GM12878 (cell line): ENCODE measurements at regions of chr7 and their contacts with region 1.

Region 1: DNA sequence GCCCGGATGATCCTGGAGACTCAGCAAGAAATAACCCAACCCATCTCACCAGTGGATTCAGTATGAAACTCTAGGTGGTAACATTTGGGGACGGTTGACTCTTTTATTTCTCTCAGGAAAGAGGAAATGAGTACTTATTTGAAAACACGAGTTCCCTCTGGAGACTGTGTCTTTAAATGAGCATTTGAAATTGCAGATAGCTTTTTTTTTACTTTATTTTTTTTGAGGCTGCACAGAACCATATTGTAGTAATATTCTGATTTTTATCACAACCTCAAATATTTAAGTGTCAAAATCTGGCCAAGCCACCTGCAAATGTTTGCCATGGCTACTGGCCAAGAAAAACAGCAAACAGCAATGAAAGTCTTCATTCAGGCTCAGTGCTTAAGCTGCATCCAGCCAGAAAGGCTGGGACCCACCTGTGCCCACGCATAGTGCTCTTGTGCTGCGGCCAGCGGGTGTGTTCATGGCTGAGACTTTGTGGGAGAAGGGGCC is 160.8 kb downstream of the CREB5 start:
- DNase-seq: no peak
- ATAC-seq: peak; percentile 40
- H3K4me3 ChIP-seq: no peak overlapping the region
- H3K27ac ChIP-seq: peak overlapping the region; percentile 29
- H3K4me1 ChIP-seq: peaks cover 23% of the 10 kb centered on the region
- H3K27me3 ChIP-seq: no peaks in the 10 kb centered on the region
- CTCF ChIP-seq: no peak
- EP300 ChIP-seq: peak in 1 of 2 experiments; percentile 9; a peak in 2 of 4 replicates
- POLR2A ChIP-seq: no peak; the same call in 1 of the 2 replicates
- RAD21 ChIP-seq: no peak

Region 2: GRCh38 chr7:28408960-28409715 is 164.0 kb before region 1 on chr7:
- CTCF ChIA-PET with region 1: interaction called, 16 read pairs
- POLR2A ChIA-PET with region 1: interaction called, 88 read pairs
- RAD21 ChIA-PET with region 1: interaction called, 156 read pairs
- SMC1A ChIA-PET with region 1: interaction called, 81 read pairs
- in situ Hi-C with region 1: no loop called
- intact Hi-C with region 1: loop called (anchors 1 kb)
- DNase-seq: no peak
- ATAC-seq: peak; percentile 60
- H3K4me3 ChIP-seq: peak overlapping the region; percentile 53
- H3K27ac ChIP-seq: no peak overlapping the region
- H3K4me1 ChIP-seq: 0 out of 2 replicates have a peak, but pooled peaks cover 2% of the 10 kb centered on the region
- H3K27me3 ChIP-seq: peaks cover 0 to 14% of the 10 kb centered on the region in 2 experiments; a peak in 2 of 4 replicates
- CTCF ChIP-seq: no peak
- EP300 ChIP-seq: 0 out of 4 replicates have a peak, but pooled peaks of 1 of the 2 experiments have one; percentile 33
- POLR2A ChIP-seq: no peak
- RAD21 ChIP-seq: no peak

Region 3: GRCh38 chr7:28520074-28521015 is 52.8 kb before region 1 on chr7:
- CTCF ChIA-PET with region 1: interaction called, 3 read pairs
- POLR2A ChIA-PET with region 1: no interaction called
- RAD21 ChIA-PET with region 1: interaction called, 15 read pairs
- SMC1A ChIA-PET with region 1: interaction called, 13 read pairs
- in situ Hi-C with region 1: no loop called
- intact Hi-C with region 1: no loop called
- DNase-seq: no peak
- ATAC-seq: no peak
- H3K4me3 ChIP-seq: no peak overlapping the region
- H3K27ac ChIP-seq: no peak overlapping the region
- H3K4me1 ChIP-seq: peaks cover 14% of the 10 kb centered on the region
- H3K27me3 ChIP-seq: no peaks in the 10 kb centered on the region
- CTCF ChIP-seq: no peak
- EP300 ChIP-seq: no peak
- POLR2A ChIP-seq: no peak
- RAD21 ChIP-seq: no peak

Region 4: GRCh38 chr7:28542410-28542809 is 30.7 kb before region 1 on chr7:
- CTCF ChIA-PET with region 1: interaction called, 13 read pairs
- POLR2A ChIA-PET with region 1: interaction called, 43 read pairs
- RAD21 ChIA-PET with region 1: interaction called, 104 read pairs
- SMC1A ChIA-PET with region 1: interaction called, 118 read pairs
- in situ Hi-C with region 1: no loop called
- intact Hi-C with region 1: loop called (anchors 1 kb)
- DNase-seq: no peak
- ATAC-seq: no peak
- H3K4me3 ChIP-seq: no peak overlapping the region
- H3K27ac ChIP-seq: no peak overlapping the region
- H3K4me1 ChIP-seq: peaks cover 8% of the 10 kb centered on the region
- H3K27me3 ChIP-seq: no peaks in the 10 kb centered on the region
- CTCF ChIP-seq: no peak
- EP300 ChIP-seq: no peak
- POLR2A ChIP-seq: no peak
- RAD21 ChIP-seq: no peak

Region 5: DNA sequence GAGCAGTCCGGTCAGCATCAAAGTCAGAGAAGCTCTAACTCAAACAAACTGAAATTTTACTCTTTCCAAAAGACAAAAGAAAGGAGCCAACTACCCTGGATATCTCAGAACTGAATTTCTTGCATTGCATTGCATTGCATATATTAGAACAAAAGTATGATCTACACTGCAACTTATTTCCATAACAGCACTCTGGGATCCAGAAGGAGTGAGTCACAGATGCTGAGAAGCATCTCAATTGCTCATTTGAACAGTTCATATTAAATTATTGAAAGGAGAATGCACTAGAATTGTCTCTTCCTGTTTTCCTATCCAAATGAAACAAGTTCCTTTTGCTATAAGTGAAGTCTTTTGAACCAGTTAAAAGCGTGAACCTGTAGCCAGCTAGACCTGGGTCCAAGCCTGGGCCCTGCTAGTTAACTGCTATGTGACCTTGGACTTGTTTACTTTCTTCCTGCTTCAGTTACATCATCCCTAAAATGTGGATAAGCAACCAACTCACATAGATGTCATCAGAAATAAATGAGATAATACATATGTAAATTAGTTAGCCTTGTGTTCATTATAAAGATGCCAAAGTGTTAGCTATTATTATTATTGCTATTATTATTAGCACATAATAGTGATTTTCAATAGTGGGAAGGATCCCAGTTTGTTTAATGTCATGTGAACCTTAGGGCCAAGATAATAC is 23.3 kb after region 1 on chr7:
- CTCF ChIA-PET with region 1: interaction called, 5 read pairs
- POLR2A ChIA-PET with region 1: interaction called, 5 read pairs
- RAD21 ChIA-PET with region 1: interaction called, 17 read pairs
- SMC1A ChIA-PET with region 1: interaction called, 103 read pairs
- in situ Hi-C with region 1: no loop called
- intact Hi-C with region 1: no loop called
- DNase-seq: no peak
- ATAC-seq: no peak
- H3K4me3 ChIP-seq: no peak overlapping the region
- H3K27ac ChIP-seq: no peak overlapping the region
- H3K4me1 ChIP-seq: no peaks in the 10 kb centered on the region
- H3K27me3 ChIP-seq: no peaks in the 10 kb centered on the region
- CTCF ChIP-seq: no peak
- EP300 ChIP-seq: no peak
- POLR2A ChIP-seq: no peak
- RAD21 ChIP-seq: no peak

Region 6: DNA sequence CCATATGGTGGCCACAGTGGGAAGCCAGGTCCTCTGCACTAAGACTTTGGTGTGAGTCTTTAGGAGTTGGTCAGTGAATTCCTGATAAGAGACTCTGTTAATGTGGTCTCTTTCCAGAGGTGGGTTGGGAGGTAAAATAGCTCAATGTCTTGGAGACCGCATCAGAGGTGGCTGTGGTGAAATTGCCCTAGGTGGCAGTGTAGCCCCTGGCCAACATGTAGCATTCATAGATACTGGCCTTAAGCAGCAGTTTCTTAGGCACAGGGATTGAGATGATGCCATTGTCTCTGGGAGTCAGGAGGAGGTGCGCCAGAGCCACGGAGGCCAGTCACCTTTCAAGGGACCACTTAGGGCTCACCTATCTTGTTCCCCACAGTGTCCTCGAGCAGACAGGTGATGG is 42.0 kb after region 1 on chr7:
- CTCF ChIA-PET with region 1: interaction called, 16 read pairs
- POLR2A ChIA-PET with region 1: interaction called, 21 read pairs
- RAD21 ChIA-PET with region 1: interaction called, 130 read pairs
- SMC1A ChIA-PET with region 1: interaction called, 151 read pairs
- in situ Hi-C with region 1: no loop called
- intact Hi-C with region 1: no loop called
- DNase-seq: no peak
- ATAC-seq: no peak
- H3K4me3 ChIP-seq: no peak overlapping the region
- H3K27ac ChIP-seq: no peak overlapping the region
- H3K4me1 ChIP-seq: no peaks in the 10 kb centered on the region
- H3K27me3 ChIP-seq: no peaks in the 10 kb centered on the region
- CTCF ChIP-seq: peak; percentile 15 to 24 (median 18); a peak in 3 of 6 replicates
- EP300 ChIP-seq: no peak
- POLR2A ChIP-seq: no peak
- RAD21 ChIP-seq: peak; percentile 29; the same call in 1 of the 2 replicates

Region 7: GRCh38 chr7:28626624-28627262 is 53.6 kb after region 1 on chr7:
- CTCF ChIA-PET with region 1: interaction called, 22 read pairs
- POLR2A ChIA-PET with region 1: interaction called, 28 read pairs
- RAD21 ChIA-PET with region 1: interaction called, 73 read pairs
- SMC1A ChIA-PET with region 1: interaction called, 81 read pairs
- in situ Hi-C with region 1: no loop called
- intact Hi-C with region 1: loop called (anchors 1 kb)
- DNase-seq: no peak
- ATAC-seq: peak; percentile 57
- H3K4me3 ChIP-seq: no peak overlapping the region
- H3K27ac ChIP-seq: no peak overlapping the region
- H3K4me1 ChIP-seq: peaks cover 3% of the 10 kb centered on the region; the same call in 1 of the 2 replicates
- H3K27me3 ChIP-seq: no peaks in the 10 kb centered on the region
- CTCF ChIP-seq: peak; percentile 50 to 70 (median 67)
- EP300 ChIP-seq: no peak
- POLR2A ChIP-seq: no peak
- RAD21 ChIP-seq: peak; percentile 74

Region 8: GRCh38 chr7:29189743-29190201 is 616.7 kb after region 1 on chr7:
- CTCF ChIA-PET with region 1: no interaction called
- POLR2A ChIA-PET with region 1: no interaction called
- RAD21 ChIA-PET with region 1: no interaction called
- SMC1A ChIA-PET with region 1: no interaction called
- in situ Hi-C with region 1: no loop called
- intact Hi-C with region 1: no loop called
- DNase-seq: no peak
- ATAC-seq: peak; percentile 95
- H3K4me3 ChIP-seq: no peak overlapping the region
- H3K27ac ChIP-seq: no peak overlapping the region
- H3K4me1 ChIP-seq: no peaks in the 10 kb centered on the region
- H3K27me3 ChIP-seq: peaks cover 0 to 10% of the 10 kb centered on the region in 2 experiments; a peak in 3 of 4 replicates
- CTCF ChIP-seq: peak; percentile 77 to 86 (median 81)
- EP300 ChIP-seq: no peak
- POLR2A ChIP-seq: no peak
- RAD21 ChIP-seq: peak; percentile 66